ENCODE measurements at regions of chr20 and their contacts with region 1.

Region 1: DNA sequence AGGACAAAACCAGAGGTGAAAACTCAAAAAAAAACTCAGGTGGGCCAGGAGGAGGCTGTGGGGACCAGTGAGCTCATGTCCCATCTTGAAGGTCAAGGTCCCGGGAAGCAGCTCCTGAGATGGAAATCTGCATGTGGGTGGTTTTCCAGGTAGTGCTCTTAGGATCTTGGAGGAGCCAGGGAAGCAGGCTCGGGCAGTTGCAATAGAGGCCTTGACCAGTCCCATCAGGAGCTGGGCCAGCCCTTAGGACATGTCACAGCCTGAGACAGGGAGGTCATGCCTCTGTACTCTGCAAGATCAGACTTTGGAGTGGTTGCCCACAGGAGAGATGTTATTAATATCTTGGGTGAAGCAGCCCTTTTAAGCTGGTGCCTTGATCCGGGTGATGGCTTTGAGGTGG is 31.4 kb downstream of the SLC52A3 start:
- DNase-seq: no peak
- ATAC-seq: no peak
- H3K4me3 ChIP-seq: no peak overlapping the region
- H3K4me3 Mint-ChIP-seq: no peak overlapping the region
- H3K27ac ChIP-seq: no peak overlapping the region
- H3K27ac Mint-ChIP-seq: no peak overlapping the region
- H3K4me1 ChIP-seq: no peaks in the 10 kb centered on the region
- H3K4me1 Mint-ChIP-seq: no peaks in the 10 kb centered on the region
- H3K27me3 ChIP-seq: peaks cover 3 to 4% of the 10 kb centered on the region in 2 experiments
- H3K27me3 Mint-ChIP-seq: peaks cover 42% of the 10 kb centered on the region
- CTCF ChIP-seq: no peak

Region 2: DNA sequence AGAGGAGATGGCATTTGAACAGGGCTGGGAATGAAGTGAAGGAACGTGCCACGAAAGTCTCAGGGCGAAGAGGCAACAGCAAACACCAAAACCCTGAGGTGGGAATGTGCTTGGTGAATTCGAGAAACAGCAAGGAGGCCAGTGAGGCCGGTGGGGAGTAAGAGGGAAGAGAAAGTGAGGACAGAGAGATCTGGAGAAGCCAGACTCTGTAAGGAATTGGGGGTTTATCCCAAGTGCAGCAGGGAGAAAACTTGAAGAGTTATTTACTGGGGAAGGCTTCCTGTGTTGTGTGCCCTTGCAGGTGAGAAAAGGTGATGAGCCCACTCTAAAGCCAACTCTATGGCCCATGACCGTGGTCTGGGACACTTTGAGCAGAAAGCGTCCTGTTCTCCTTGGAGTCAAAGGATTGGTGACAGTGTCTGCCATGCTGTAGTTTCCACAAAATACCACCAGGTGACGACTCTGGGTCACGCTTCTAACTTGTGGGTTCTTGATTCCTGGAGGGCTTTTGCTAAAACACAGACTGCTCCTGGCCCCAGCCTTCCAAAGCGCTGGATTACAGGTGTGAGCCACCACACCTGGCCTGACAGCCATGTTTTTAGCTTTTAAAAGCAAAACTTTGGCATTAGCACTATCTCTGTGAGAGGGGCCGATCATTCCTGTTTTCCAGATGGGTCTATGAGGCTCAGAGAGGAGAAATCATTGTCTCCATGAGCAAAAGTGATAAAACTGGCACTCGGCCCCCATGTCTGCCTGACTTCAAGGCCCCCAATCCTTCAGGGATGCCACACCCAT is 175.3 kb before region 1 on chr20:
- CTCF ChIA-PET with region 1: no interaction called
- POLR2A ChIA-PET with region 1: no interaction called
- intact Hi-C with region 1: loop called in 1 of 2 experiments (anchors 5 kb)
- DNase-seq: peak in 11 of 14 experiments; percentile 4 to 62 (median 15)
- ATAC-seq: peak; percentile 72
- H3K4me3 ChIP-seq: no peak overlapping the region
- H3K4me3 Mint-ChIP-seq: no peak overlapping the region
- H3K27ac ChIP-seq: no peak overlapping the region
- H3K27ac Mint-ChIP-seq: no peak overlapping the region
- H3K4me1 ChIP-seq: no peaks in the 10 kb centered on the region
- H3K4me1 Mint-ChIP-seq: no peaks in the 10 kb centered on the region
- H3K27me3 ChIP-seq: peaks cover 2 to 8% of the 10 kb centered on the region in 2 experiments
- H3K27me3 Mint-ChIP-seq: peaks cover 26% of the 10 kb centered on the region
- CTCF ChIP-seq: peak; percentile 59

Region 3: DNA sequence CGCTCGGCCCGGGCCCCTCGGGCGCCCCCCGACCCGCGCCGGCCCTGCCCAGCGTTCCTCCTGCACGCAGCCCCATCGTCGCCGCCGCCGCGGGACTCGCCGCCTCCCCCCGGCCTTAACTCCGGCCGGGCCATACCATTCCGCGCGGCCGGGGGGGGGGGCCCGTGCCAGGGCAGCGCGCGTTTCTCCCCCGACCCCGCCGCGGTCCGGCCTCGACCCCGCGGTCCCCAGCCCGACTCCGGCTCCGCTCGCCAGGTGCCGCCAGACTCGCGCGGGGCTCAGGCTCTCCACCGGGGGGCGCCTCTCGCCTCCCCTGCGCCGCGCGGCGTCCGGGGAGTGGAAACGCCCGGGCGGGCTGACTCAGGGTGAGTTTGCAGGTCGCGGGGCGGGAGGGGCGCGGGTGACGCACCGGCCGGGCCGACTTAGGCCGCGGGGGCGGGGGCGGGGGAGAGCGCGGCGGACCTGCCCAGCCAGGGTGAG is 83.7 kb before region 1 on chr20 and contains the start of gene SRXN1:
- CTCF ChIA-PET with region 1: no interaction called
- POLR2A ChIA-PET with region 1: no interaction called
- intact Hi-C with region 1: no loop called
- DNase-seq: peak; percentile 53 to 89 (median 71)
- ATAC-seq: peak; percentile 87
- H3K4me3 ChIP-seq: peak within 1 kb of the TSS; percentile 62
- H3K4me3 Mint-ChIP-seq: peak within 1 kb of the TSS; percentile 86
- H3K27ac ChIP-seq: peak within 1 kb of the TSS in 1 of 2 donors; percentile 4
- H3K27ac Mint-ChIP-seq: peak within 1 kb of the TSS; percentile 4
- H3K4me1 ChIP-seq: peaks cover 23% of the 10 kb centered on the region
- H3K4me1 Mint-ChIP-seq: peaks cover 34% of the 10 kb centered on the region
- H3K27me3 ChIP-seq: peaks cover 0 to 7% of the 10 kb centered on the region in 2 experiments
- H3K27me3 Mint-ChIP-seq: peaks cover 22% of the 10 kb centered on the region
- CTCF ChIP-seq: peak; percentile 40
- total RNA-seq, gene SRXN1: 1.2 to 1.4 TPM

Region 4: DNA sequence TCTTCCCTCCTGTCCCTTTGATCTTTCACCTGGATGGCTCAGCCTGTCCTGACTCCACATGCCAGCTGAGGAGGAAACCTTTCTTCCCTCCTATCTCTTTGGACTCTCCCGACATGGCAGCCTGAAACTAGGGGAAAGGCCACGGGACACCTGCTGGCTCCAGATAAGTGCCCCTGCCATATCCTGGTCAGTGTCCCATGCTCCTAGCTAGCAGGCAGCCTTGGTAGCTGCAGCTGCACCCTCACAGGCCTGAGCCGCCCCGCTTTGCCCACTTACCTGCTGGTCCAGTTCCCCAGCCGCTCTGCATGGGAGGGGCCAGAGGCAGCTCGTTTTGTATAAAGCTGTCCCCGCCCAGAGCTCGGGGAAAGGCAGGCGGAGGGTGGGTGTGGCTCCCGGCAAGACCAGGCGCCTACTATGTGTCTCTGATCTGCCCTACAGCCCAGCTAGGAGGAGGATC is 38.8 kb after region 1 on chr20:
- CTCF ChIA-PET with region 1: no interaction called
- POLR2A ChIA-PET with region 1: no interaction called
- intact Hi-C with region 1: no loop called
- DNase-seq: no peak
- ATAC-seq: no peak
- H3K4me3 ChIP-seq: no peak overlapping the region
- H3K4me3 Mint-ChIP-seq: no peak overlapping the region
- H3K27ac ChIP-seq: no peak overlapping the region
- H3K27ac Mint-ChIP-seq: no peak overlapping the region
- H3K4me1 ChIP-seq: no peaks in the 10 kb centered on the region
- H3K4me1 Mint-ChIP-seq: no peaks in the 10 kb centered on the region
- H3K27me3 ChIP-seq: peaks cover 4 to 11% of the 10 kb centered on the region in 2 experiments
- H3K27me3 Mint-ChIP-seq: peaks cover 18% of the 10 kb centered on the region
- CTCF ChIP-seq: no peak